ENCODE measurements at regions of chr5 and their contacts with region 1.

Region 1: GRCh38 chr5:147369742-147370374 is 135.0 kb downstream of the STK32A start:
- DNase-seq: no peak
- H3K4me3 Mint-ChIP-seq: no peak overlapping the region
- H3K27ac Mint-ChIP-seq: no peak overlapping the region
- H3K4me1 Mint-ChIP-seq: peaks cover 9% of the 10 kb centered on the region
- H3K27me3 Mint-ChIP-seq: no peaks in the 10 kb centered on the region
- CTCF ChIP-seq: peak; percentile 68

Region 2: GRCh38 chr5:146541958-146542849 is 827.7 kb before region 1 on chr5:
- CTCF ChIA-PET with region 1: interaction called, 3 read pairs
- intact Hi-C with region 1: loop called (anchors 10 kb)
- DNase-seq: peak; percentile 94
- H3K4me3 Mint-ChIP-seq: no peak overlapping the region
- H3K27ac Mint-ChIP-seq: no peak overlapping the region
- H3K4me1 Mint-ChIP-seq: peaks cover 20% of the 10 kb centered on the region
- H3K27me3 Mint-ChIP-seq: no peaks in the 10 kb centered on the region
- CTCF ChIP-seq: peak; percentile 97

Region 3: GRCh38 chr5:146878476-146879172 is 491.2 kb before region 1 on chr5 and contains the start of gene PPP2R2B:
- CTCF ChIA-PET with region 1: no interaction called
- intact Hi-C with region 1: no loop called
- DNase-seq: peak; percentile 51
- H3K4me3 Mint-ChIP-seq: peak within 1 kb of the TSS; percentile 71
- H3K27ac Mint-ChIP-seq: no peak within 1 kb of the TSS
- H3K4me1 Mint-ChIP-seq: no peaks in the 10 kb centered on the region
- H3K27me3 Mint-ChIP-seq: peaks cover 63% of the 10 kb centered on the region
- CTCF ChIP-seq: no peak
- total RNA-seq, gene PPP2R2B: 1.2 TPM in 1 of 2 replicates, not detected in the other

Region 4: DNA sequence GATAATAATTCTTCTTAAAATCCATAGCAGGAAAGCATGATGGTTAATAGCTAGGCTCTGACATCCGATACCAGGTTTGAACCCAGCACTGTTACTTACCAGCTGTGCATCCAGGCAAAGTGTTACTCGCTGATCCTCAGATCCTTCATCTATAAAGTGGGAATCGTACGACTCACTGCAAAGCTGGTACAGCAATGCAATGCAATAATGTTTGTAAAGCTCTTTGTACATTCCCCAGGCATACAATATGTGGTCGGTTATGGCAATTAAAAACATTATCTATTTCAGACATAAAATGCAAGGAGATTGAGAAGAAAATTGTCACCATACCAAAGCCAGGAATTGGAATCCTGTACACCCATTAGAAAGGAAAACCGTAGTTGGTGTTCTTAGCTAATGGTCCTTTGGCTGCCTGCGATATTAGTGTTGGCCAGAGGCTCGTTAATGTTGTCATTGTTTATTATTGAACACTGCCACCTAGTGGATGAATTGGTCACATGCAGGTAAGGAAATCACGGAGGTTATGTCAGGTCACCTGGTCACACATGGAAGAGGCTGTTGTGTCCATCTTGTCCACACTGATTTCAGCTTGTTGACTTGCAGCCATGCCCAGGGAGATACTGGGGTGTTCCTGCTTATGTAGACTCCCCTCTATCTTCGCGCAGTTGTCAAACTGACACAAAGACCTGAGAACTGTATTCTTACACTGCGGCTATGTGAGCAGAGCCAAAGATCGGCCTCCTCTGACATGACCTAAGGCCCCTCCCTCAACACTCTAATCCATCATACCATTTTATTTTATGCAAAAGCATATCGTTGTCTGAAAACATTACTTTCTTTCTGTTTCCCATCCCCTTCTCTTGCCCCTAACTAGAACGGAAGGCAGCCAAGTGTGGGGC is 403.8 kb before region 1 on chr5:
- CTCF ChIA-PET with region 1: interaction called, 3 read pairs
- intact Hi-C with region 1: loop called (anchors 10 kb)
- DNase-seq: peak; percentile 71
- H3K4me3 Mint-ChIP-seq: no peak overlapping the region
- H3K27ac Mint-ChIP-seq: no peak overlapping the region
- H3K4me1 Mint-ChIP-seq: peaks cover 9% of the 10 kb centered on the region
- H3K27me3 Mint-ChIP-seq: no peaks in the 10 kb centered on the region
- CTCF ChIP-seq: peak; percentile 78

Region 5: GRCh38 chr5:147098233-147098790 is 271.5 kb before region 1 on chr5:
- CTCF ChIA-PET with region 1: interaction called, 13 read pairs
- intact Hi-C with region 1: loop called (anchors 2 kb)
- DNase-seq: peak; percentile 67
- H3K4me3 Mint-ChIP-seq: no peak overlapping the region
- H3K27ac Mint-ChIP-seq: no peak overlapping the region
- H3K4me1 Mint-ChIP-seq: no peaks in the 10 kb centered on the region
- H3K27me3 Mint-ChIP-seq: no peaks in the 10 kb centered on the region
- CTCF ChIP-seq: peak; percentile 71

Region 6: DNA sequence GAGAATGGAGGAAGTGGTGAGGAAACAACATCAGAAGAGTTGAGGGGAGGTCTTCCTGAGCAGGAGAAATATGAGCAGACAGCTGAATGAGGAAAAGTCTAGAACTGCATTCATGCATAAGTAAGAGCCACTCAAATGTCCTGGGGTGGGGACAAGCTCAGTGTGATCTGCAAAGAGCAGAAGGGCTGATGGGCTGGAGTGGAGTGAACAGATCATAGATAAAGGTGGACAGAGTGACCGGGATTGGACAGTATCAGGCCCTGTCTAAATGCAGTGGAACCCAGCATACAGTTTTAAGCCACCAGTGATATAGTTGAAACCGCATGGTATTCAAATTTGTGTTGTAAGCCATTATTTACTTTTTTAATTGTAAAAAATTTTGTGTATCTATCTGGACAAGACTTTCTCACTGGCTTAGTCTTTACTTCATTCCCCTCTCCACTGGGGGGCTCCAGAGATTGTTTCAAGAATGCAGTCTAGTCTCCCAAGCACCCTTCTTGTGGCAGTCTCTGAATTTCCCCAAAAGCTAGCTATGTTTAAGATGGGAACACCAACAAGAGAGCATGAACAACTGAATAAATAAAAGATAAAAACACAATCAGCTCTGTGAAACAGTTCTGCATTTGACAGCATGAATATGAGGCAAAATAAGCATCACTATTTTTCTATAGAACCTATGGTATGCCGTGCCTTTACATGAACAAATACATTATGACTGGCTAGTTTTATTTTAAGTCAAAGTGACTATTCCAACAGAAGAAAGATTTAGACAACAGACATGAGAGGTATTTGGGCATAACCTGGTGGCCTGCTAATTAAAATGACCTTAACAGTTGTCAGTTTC is 145.7 kb before region 1 on chr5:
- CTCF ChIA-PET with region 1: interaction called, 47 read pairs
- intact Hi-C with region 1: loop called (anchors 1 kb)
- DNase-seq: peak; percentile 75
- H3K4me3 Mint-ChIP-seq: no peak overlapping the region
- H3K27ac Mint-ChIP-seq: no peak overlapping the region
- H3K4me1 Mint-ChIP-seq: peaks cover 10% of the 10 kb centered on the region
- H3K27me3 Mint-ChIP-seq: no peaks in the 10 kb centered on the region
- CTCF ChIP-seq: peak; percentile 69

Region 7: GRCh38 chr5:147234825-147235635 is 134.8 kb before region 1 on chr5 and contains the start of gene STK32A:
- CTCF ChIA-PET with region 1: interaction called, 35 read pairs
- intact Hi-C with region 1: loop called (anchors 2 kb)
- DNase-seq: peak; percentile 93
- H3K4me3 Mint-ChIP-seq: peak within 1 kb of the TSS; percentile 89
- H3K27ac Mint-ChIP-seq: peak within 1 kb of the TSS; percentile 72
- H3K4me1 Mint-ChIP-seq: peaks cover 28% of the 10 kb centered on the region
- H3K27me3 Mint-ChIP-seq: no peaks in the 10 kb centered on the region
- CTCF ChIP-seq: no peak
- total RNA-seq, gene STK32A: 29.5 and 32.5 TPM in 2 replicates

Region 8: GRCh38 chr5:148202531-148203203 is 832.8 kb after region 1 on chr5 and contains the start of gene SPINK6:
- CTCF ChIA-PET with region 1: no interaction called
- intact Hi-C with region 1: no loop called
- DNase-seq: no peak
- H3K4me3 Mint-ChIP-seq: no peak within 1 kb of the TSS
- H3K27ac Mint-ChIP-seq: no peak within 1 kb of the TSS
- H3K4me1 Mint-ChIP-seq: no peaks in the 10 kb centered on the region
- H3K27me3 Mint-ChIP-seq: no peaks in the 10 kb centered on the region
- CTCF ChIP-seq: no peak
- total RNA-seq, gene SPINK6: not detected in 2 replicates

Region 9: DNA sequence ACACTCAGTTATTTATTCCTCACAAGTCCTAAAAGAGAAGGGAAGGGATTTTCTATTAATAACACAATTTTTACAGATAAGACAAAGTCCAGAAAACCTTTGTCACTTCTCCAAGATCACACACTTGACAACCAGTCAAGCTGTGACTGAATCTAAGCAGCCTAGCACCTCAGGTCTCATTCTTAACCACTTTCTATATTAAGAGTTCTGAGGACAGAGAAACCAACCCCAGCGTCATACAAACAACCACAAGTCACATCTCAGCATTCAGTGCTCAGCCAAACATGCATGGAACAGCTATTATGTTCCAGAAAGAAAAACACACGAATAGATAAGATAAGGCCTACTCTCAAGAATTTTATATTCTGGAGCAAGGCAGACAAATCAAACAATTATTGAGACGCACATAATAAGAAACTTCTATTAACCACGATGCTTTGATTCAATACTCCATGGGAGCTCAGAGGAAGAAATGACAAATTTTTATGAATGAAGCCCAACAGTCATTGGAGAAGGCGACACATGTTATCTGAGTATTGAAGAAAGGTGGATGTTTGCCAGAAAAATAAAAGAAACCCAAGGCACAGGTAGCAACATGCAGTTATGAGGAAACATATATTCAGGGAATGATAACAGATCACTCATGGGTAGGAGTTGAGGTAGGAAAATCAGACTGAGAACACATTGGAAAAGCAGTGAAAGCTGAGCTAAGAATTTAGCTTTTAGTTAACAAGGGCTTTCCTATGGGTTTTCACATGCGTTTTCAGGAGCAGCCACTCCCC is 1171.4 kb after region 1 on chr5:
- CTCF ChIA-PET with region 1: no interaction called
- intact Hi-C with region 1: no loop called
- DNase-seq: no peak
- H3K4me3 Mint-ChIP-seq: no peak overlapping the region
- H3K27ac Mint-ChIP-seq: no peak overlapping the region
- H3K4me1 Mint-ChIP-seq: no peaks in the 10 kb centered on the region
- H3K27me3 Mint-ChIP-seq: peaks cover 85% of the 10 kb centered on the region
- CTCF ChIP-seq: no peak

Measured in Calu3 (cell line).